Activated B cell treated with CpG ODN at 0.5 μM for 24 hours (primary cell): ENCODE measurements at regions of chr7 and their contacts with region 1.

Region 1: GRCh38 chr7:5193880-5194279 is 3.8 kb downstream of the WIPI2 start:
- DNase-seq: no peak
- ATAC-seq: no peak
- H3K4me3 Mint-ChIP-seq: no peak overlapping the region
- H3K27ac Mint-ChIP-seq: no peak overlapping the region
- H3K4me1 Mint-ChIP-seq: peaks cover 22% of the 10 kb centered on the region
- H3K27me3 Mint-ChIP-seq: no peaks in the 10 kb centered on the region
- CTCF ChIP-seq: no peak

Region 2: DNA sequence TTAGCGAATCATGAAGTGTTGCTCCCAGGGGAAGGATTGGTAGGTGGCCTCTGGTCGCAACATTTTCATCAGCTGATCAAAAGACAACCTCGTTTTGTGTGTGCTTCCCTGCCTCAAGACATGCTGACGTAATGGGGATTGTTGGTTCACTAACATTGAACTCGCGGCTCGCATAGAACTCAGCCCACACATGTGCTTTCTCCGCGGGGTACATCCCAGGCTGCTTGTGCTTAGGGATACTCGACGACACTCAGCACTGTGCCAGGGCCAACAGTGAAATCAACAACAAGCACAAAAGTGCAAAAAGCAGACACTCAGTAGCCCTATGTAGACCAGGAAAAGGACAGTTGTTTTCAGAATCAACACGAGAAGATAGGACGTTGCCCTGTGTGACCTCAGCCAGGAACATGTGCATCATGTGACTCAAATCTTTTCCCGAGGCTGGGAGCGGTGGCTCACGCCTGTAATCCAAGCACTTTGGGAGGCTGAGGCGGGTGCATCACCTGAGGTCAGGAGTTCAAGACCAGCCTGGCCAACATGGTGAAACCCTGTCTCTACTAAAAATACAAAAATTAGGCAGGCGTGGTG is 17.0 kb after region 1 on chr7:
- CTCF ChIA-PET with region 1: no interaction called
- POLR2A ChIA-PET with region 1: no interaction called
- intact Hi-C with region 1: loop called (anchors 2 kb)
- DNase-seq: no peak
- ATAC-seq: no peak
- H3K4me3 Mint-ChIP-seq: no peak overlapping the region
- H3K27ac Mint-ChIP-seq: no peak overlapping the region
- H3K4me1 Mint-ChIP-seq: peaks cover 18% of the 10 kb centered on the region
- H3K27me3 Mint-ChIP-seq: no peaks in the 10 kb centered on the region
- CTCF ChIP-seq: no peak

Region 3: GRCh38 chr7:5218564-5219360 is 24.9 kb after region 1 on chr7:
- CTCF ChIA-PET with region 1: no interaction called
- POLR2A ChIA-PET with region 1: no interaction called
- intact Hi-C with region 1: loop called (anchors 1 kb)
- DNase-seq: peak; percentile 52
- ATAC-seq: peak; percentile 89
- H3K4me3 Mint-ChIP-seq: peak overlapping the region; percentile 64
- H3K27ac Mint-ChIP-seq: peak overlapping the region; percentile 92
- H3K4me1 Mint-ChIP-seq: peaks cover 38% of the 10 kb centered on the region
- H3K27me3 Mint-ChIP-seq: no peaks in the 10 kb centered on the region
- CTCF ChIP-seq: no peak

Region 4: DNA sequence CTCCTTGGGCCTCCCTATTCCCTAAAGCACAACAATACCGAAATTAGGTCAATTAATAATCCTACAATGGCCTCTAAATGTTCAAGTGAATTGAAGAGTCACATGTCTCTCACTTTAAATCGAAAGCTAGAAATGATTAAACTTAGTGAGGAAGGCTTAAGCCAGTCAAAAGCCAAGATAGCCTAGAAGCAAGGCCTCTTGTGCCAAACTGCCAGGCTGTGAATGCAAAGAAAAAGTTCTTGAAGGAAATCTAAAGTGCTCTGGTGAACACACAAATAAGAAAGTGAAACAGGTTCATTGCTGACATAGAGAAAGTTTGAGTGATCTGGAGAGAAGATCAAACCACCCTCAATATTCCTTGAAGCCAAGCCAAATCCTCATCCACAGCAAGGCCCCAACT is 146.1 kb after region 1 on chr7:
- CTCF ChIA-PET with region 1: no interaction called
- POLR2A ChIA-PET with region 1: no interaction called
- intact Hi-C with region 1: no loop called
- DNase-seq: no peak
- ATAC-seq: no peak
- H3K4me3 Mint-ChIP-seq: no peak overlapping the region
- H3K27ac Mint-ChIP-seq: no peak overlapping the region
- H3K4me1 Mint-ChIP-seq: no peaks in the 10 kb centered on the region
- H3K27me3 Mint-ChIP-seq: no peaks in the 10 kb centered on the region
- CTCF ChIP-seq: no peak